Activated naive CD4-positive, alpha-beta T cell treated with anti-CD3 and anti-CD28 coated beads for 36 hours (primary cell): ENCODE measurements at regions of chr21 and their contacts with region 1.

Region 1: GRCh38 chr21:33360881-33361602 is 36.3 kb downstream of the IFNAR1 start:
- DNase-seq: peak; percentile 97
- H3K4me3 Mint-ChIP-seq: peak overlapping the region; percentile 86
- H3K27ac Mint-ChIP-seq: peak overlapping the region; percentile 95
- H3K4me1 Mint-ChIP-seq: peaks cover 17% of the 10 kb centered on the region
- H3K27me3 Mint-ChIP-seq: no peaks in the 10 kb centered on the region

Region 2: DNA sequence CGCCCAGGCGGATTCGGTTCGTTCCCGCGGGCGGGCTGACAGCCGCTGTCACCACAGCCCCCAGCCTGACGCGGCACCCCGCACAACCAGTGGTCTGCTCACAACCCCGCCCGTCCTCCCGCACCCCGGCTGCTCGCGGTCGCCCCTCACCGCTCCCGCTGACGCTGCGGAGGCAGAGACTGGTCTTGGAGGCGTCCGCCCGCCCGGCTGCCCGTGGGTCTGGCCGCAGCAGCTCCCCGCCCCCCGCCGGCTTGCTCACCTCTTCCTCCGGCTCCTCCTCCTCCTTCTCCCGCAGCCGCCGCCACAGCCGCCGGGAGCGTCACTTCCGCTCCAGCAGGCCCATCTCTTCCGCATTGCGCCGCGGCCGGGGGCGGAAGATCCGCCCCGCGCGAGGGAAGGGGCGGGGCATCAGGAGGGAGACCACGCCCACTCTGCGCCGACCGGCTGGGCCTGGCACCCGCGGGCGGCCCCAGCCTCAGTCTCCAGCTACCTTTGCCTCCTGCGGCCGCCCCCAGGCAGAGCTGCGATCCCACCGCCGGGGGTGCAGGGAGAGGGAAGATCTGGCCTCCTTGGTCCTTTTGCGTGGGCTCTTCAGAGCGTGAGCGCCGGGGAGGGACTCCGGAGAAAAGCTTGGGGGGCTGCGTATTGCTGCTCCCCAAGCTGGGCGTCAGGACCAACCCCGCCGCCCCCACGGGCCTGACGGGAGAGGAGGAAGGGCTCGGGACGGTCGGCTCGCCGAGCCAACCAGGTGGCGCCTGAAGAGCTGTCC is 633.2 kb before region 1 on chr21 and contains the start of gene SYNJ1:
- CTCF ChIA-PET with region 1: no interaction called
- intact Hi-C with region 1: loop called (anchors 5 kb)
- DNase-seq: peak; percentile 94
- H3K4me3 Mint-ChIP-seq: peak within 1 kb of the TSS; percentile 96
- H3K27ac Mint-ChIP-seq: peak within 1 kb of the TSS; percentile 88
- H3K4me1 Mint-ChIP-seq: peaks cover 45% of the 10 kb centered on the region
- H3K27me3 Mint-ChIP-seq: no peaks in the 10 kb centered on the region
- total RNA-seq, gene SYNJ1: 7.4 to 10.9 TPM

Region 3: GRCh38 chr21:33293811-33294216 is 67.2 kb before region 1 on chr21:
- CTCF ChIA-PET with region 1: interaction called, 9 read pairs
- intact Hi-C with region 1: loop called (anchors 2 kb)
- DNase-seq: peak; percentile 39
- H3K4me3 Mint-ChIP-seq: no peak overlapping the region
- H3K27ac Mint-ChIP-seq: peak overlapping the region; percentile 61
- H3K4me1 Mint-ChIP-seq: peaks cover 40% of the 10 kb centered on the region
- H3K27me3 Mint-ChIP-seq: no peaks in the 10 kb centered on the region

Region 4: DNA sequence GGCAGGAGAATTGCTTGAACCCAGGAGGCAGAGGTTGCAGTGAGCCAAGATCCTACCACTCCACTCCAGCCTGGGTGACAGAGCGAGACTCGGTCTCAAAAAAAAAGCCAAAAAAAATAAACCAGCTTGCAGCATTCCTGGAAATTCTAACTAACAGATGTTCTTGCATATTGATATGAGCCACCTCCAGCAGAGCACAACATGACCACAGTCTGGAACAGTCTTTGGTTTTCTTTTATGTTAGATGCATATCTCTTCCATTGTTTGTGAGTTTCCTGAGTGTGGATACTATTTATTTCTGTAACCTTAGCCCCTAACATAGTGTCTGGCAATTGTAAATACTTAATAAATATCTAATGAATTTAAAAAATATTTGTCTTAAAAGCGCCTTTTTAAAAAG is 12.3 kb before region 1 on chr21:
- CTCF ChIA-PET with region 1: interaction called, 42 read pairs
- intact Hi-C with region 1: no loop called
- DNase-seq: no peak
- H3K4me3 Mint-ChIP-seq: no peak overlapping the region
- H3K27ac Mint-ChIP-seq: no peak overlapping the region
- H3K4me1 Mint-ChIP-seq: peaks cover 19% of the 10 kb centered on the region
- H3K27me3 Mint-ChIP-seq: no peaks in the 10 kb centered on the region

Region 5: GRCh38 chr21:33403779-33404585 is 42.9 kb after region 1 on chr21:
- CTCF ChIA-PET with region 1: interaction called, 26 read pairs
- intact Hi-C with region 1: no loop called
- DNase-seq: peak; percentile 53
- H3K4me3 Mint-ChIP-seq: peak overlapping the region; percentile 84
- H3K27ac Mint-ChIP-seq: peak overlapping the region; percentile 84
- H3K4me1 Mint-ChIP-seq: peaks cover 38% of the 10 kb centered on the region
- H3K27me3 Mint-ChIP-seq: peaks cover 2% of the 10 kb centered on the region

Region 6: DNA sequence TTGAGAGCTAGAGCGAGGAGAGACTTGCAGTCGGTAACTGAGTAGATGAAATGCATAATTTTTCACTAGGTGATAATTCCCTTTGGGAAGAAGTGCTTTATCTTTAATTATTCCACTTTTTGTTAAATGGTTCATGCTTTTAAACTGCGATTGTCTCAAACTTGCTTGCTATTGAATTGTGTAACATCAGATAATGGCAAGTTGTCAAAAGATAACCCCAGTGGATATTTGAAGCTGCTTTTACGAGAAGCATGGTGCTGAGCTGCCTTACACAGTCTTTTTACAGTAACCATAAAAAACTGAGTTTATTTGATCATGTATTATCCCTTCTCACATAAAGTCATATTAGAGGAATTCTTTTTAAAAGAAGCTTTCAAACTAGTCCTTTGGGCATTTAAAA is 88.6 kb after region 1 on chr21:
- CTCF ChIA-PET with region 1: interaction called, 79 read pairs
- intact Hi-C with region 1: loop called (anchors 1 kb)
- DNase-seq: no peak
- H3K4me3 Mint-ChIP-seq: no peak overlapping the region
- H3K27ac Mint-ChIP-seq: no peak overlapping the region
- H3K4me1 Mint-ChIP-seq: peaks cover 4% of the 10 kb centered on the region
- H3K27me3 Mint-ChIP-seq: no peaks in the 10 kb centered on the region